ENCODE measurements at regions of chr5 and their contacts with region 1.

Region 1: GRCh38 chr5:124748687-124749594 is 2.5 kb upstream of the ZNF608 start:
- DNase-seq: peak; percentile 91

Region 2: DNA sequence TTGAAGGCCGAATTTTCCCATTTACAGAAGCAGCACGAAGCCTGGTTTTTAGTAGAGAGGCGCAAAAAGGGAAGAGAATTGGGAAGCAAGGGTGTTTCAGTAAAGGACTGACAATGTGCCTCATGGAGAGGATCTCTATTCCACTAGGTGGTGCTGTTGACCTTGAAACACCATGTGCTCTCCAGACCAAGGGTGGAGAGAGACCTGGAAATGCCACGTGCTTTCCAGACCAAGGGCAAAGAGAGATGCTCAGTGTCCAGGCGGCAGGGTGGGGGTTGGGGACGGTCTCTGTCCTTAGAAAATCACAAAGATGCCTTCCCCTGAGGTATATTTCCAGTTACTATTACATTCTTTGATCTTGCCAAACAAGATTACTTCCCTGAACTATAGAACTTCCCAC is 811.7 kb before region 1 on chr5:
- intact Hi-C with region 1: loop called (anchors 10 kb)
- DNase-seq: no peak

Region 3: GRCh38 chr5:124536333-124536732 is 212.6 kb before region 1 on chr5:
- intact Hi-C with region 1: loop called (anchors 2 kb)
- DNase-seq: no peak

Region 4: GRCh38 chr5:124649491-124650146 is 99.3 kb before region 1 on chr5:
- intact Hi-C with region 1: loop called (anchors 2 kb)
- DNase-seq: peak; percentile 94

Region 5: GRCh38 chr5:124841829-124842712 is 93.1 kb after region 1 on chr5:
- intact Hi-C with region 1: no loop called
- DNase-seq: no peak

Region 6: GRCh38 chr5:124923131-124923530 is 174.2 kb after region 1 on chr5:
- intact Hi-C with region 1: no loop called
- DNase-seq: no peak

Region 7: GRCh38 chr5:125043781-125044391 is 294.9 kb after region 1 on chr5:
- intact Hi-C with region 1: loop called (anchors 5 kb)
- DNase-seq: peak; percentile 87

Region 8: GRCh38 chr5:125835293-125836172 is 1086.6 kb after region 1 on chr5:
- intact Hi-C with region 1: loop called (anchors 10 kb)
- DNase-seq: no peak